Common myeloid progenitor, CD34-positive (primary cell): ENCODE measurements at regions of chr11 and their contacts with region 1.

Region 1: GRCh38 chr11:62458212-62459002 is 39.6 kb downstream of the SCGB1A1 start:
- DNase-seq: peak in 2 of 3 donors; percentile 51 to 68
- H3K4me3 ChIP-seq: no peak overlapping the region
- H3K27ac ChIP-seq: peak overlapping the region in 1 of 2 experiments; percentile 21
- H3K4me1 ChIP-seq: peaks cover 0 to 6% (median 4%) of the 10 kb centered on the region in 4 experiments
- H3K27me3 ChIP-seq: no peaks in the 10 kb centered on the region

Region 2: GRCh38 chr11:62233730-62234129 is 224.7 kb before region 1 on chr11:
- CTCF ChIA-PET with region 1: no interaction called
- POLR2A ChIA-PET with region 1: no interaction called
- DNase-seq: peak in 2 of 3 donors; percentile 28 to 32
- H3K4me3 ChIP-seq: no peak overlapping the region
- H3K27ac ChIP-seq: no peak overlapping the region
- H3K4me1 ChIP-seq: no peaks in the 10 kb centered on the region
- H3K27me3 ChIP-seq: peaks cover 4 to 25% (median 9%) of the 10 kb centered on the region in 5 experiments

Region 3: GRCh38 chr11:62487738-62488551 is 29.5 kb after region 1 on chr11:
- CTCF ChIA-PET with region 1: interaction called, 10 read pairs
- POLR2A ChIA-PET with region 1: interaction called, 3 read pairs
- DNase-seq: no peak
- H3K4me3 ChIP-seq: no peak overlapping the region
- H3K27ac ChIP-seq: no peak overlapping the region
- H3K4me1 ChIP-seq: peaks cover 0 to 7% (median 2%) of the 10 kb centered on the region in 4 experiments
- H3K27me3 ChIP-seq: no peaks in the 10 kb centered on the region

Region 4: DNA sequence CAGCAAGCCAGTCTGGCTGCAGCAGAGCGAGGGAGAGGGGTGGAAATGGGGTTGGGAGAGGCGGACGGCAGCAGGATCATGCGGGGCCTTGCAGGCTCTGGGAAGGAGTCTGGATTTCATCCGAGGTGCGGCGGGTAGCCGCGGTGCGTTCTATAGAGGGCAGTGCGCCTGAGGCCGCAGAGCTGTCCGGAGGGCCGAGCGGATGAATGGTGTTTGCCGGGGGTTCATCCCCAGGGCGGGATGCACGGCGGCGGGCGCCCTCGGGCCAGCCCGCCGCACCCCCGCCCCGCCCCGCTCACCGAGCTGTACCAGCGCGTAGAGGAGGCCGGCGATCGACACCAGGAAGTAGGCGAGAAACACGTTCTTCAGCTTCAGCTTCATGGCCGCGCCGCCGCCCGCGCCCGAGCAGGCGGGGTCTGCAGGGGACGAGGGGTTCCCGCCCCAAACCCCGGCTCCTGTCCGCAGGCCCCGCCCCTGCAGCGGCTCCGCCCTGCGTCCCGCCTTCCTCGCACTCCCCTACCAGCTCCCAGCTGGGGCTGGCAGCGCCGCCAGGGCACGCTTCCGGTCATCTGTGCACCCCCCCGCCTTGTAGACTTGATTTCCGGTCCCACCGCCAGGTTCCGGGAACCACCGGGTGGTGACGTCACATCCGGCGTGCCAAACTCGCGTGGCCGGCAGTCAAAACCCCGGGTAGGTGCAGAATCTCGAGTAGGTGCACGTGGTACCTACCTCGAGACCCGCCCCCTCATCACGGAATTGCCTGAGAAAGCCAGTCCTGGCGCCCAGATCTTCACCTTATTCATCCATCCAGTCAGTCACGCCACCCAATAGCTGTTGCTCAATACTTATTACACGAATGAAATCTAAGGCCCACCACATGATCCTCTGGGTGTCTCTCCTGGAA is 163.4 kb after region 1 on chr11 and contains the start of gene B3GAT3:
- CTCF ChIA-PET with region 1: no interaction called
- POLR2A ChIA-PET with region 1: no interaction called
- DNase-seq: peak; percentile 94 to 97 (median 97)
- H3K4me3 ChIP-seq: peak within 1 kb of the TSS; percentile 50 to 96 (median 78)
- H3K27ac ChIP-seq: peak within 1 kb of the TSS; percentile 72 to 83
- H3K4me1 ChIP-seq: peaks cover 8 to 35% (median 30%) of the 10 kb centered on the region in 4 experiments
- H3K27me3 ChIP-seq: no peaks in the 10 kb centered on the region